Calu3 (cell line): ENCODE measurements at regions of chr20 and their contacts with region 1.

Region 1: DNA sequence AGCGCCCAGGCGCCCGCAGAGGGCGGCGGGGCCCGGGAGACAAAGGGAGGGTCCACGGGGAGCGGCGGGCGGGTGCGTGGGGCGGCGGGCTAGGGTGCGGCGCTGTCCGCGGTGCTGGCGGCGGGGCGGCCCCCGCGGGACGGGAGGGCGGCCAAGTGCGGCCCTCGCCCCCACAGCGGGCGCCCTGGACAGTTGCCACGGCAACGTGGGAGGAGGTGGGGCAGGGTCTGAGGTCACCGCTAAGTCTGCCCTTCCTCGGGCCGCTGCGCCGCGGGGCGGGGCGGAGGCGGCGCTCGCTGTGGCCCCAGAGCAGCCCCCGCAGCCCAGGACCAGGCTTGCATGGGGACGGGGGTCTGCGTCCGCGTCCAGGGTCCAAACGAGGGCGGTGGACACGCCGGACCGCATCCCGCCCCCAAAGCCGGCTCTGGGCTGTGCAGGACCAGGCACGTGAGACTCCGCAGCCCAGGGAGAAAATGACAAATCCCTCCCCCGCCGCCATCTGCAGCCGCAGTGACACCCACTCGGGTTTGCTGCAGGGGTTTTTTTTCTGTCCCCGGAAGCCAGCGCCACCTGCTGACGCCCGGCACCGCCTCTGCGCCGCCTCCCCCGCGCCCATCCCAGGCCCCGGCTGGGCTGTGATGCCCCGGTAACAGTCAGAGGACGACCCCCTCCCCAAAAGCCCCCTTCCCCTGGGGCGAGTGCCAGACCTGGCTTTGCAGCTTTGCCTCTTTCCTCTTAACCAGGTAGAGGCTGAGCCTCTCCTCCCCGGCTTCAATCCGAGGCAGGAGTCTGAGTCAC is 36.8 kb downstream of the YTHDF1 start:
- DNase-seq: peak; percentile 75
- H3K4me3 Mint-ChIP-seq: peak overlapping the region; percentile 36
- H3K27ac Mint-ChIP-seq: no peak overlapping the region
- H3K4me1 Mint-ChIP-seq: no peaks in the 10 kb centered on the region
- H3K27me3 Mint-ChIP-seq: peaks cover 97% of the 10 kb centered on the region
- CTCF ChIP-seq: peak; percentile 65

Region 2: GRCh38 chr20:62921119-62921687 is 257.9 kb before region 1 on chr20:
- CTCF ChIA-PET with region 1: no interaction called
- intact Hi-C with region 1: no loop called
- DNase-seq: peak; percentile 84
- H3K4me3 Mint-ChIP-seq: peak overlapping the region; percentile 44
- H3K27ac Mint-ChIP-seq: no peak overlapping the region
- H3K4me1 Mint-ChIP-seq: peaks cover 70% of the 10 kb centered on the region
- H3K27me3 Mint-ChIP-seq: no peaks in the 10 kb centered on the region
- CTCF ChIP-seq: peak; percentile 91

Region 3: GRCh38 chr20:63056236-63056948 is 122.7 kb before region 1 on chr20:
- CTCF ChIA-PET with region 1: interaction called, 4 read pairs
- intact Hi-C with region 1: loop called (anchors 5 kb)
- DNase-seq: peak; percentile 78
- H3K4me3 Mint-ChIP-seq: no peak overlapping the region
- H3K27ac Mint-ChIP-seq: no peak overlapping the region
- H3K4me1 Mint-ChIP-seq: no peaks in the 10 kb centered on the region
- H3K27me3 Mint-ChIP-seq: peaks cover 44% of the 10 kb centered on the region
- CTCF ChIP-seq: peak; percentile 99

Region 4: GRCh38 chr20:63253438-63254236 is 74.5 kb after region 1 on chr20:
- CTCF ChIA-PET with region 1: no interaction called
- intact Hi-C with region 1: loop called (anchors 5 kb)
- DNase-seq: no peak
- H3K4me3 Mint-ChIP-seq: no peak overlapping the region
- H3K27ac Mint-ChIP-seq: no peak overlapping the region
- H3K4me1 Mint-ChIP-seq: no peaks in the 10 kb centered on the region
- H3K27me3 Mint-ChIP-seq: peaks cover 94% of the 10 kb centered on the region
- CTCF ChIP-seq: no peak